ENCODE measurements at regions of chr11 and their contacts with region 1.

Region 1: GRCh38 chr11:10455637-10456487 is 798 bp downstream of the AMPD3 start:
- DNase-seq: peak; percentile 70 to 91 (median 75)
- H3K4me3 ChIP-seq: peak overlapping the region; percentile 53 to 85
- H3K4me3 Mint-ChIP-seq: peak overlapping the region; percentile 90 to 96 (median 93)
- H3K27ac ChIP-seq: peak overlapping the region; percentile 75
- H3K27ac Mint-ChIP-seq: peak overlapping the region; percentile 94 to 97 (median 95)
- H3K4me1 ChIP-seq: peaks cover 84% of the 10 kb centered on the region
- H3K4me1 Mint-ChIP-seq: peaks cover 59 to 97% (median 79%) of the 10 kb centered on the region in 4 donors
- H3K27me3 ChIP-seq: no peaks in the 10 kb centered on the region
- H3K27me3 Mint-ChIP-seq: no peaks in the 10 kb centered on the region

Region 2: DNA sequence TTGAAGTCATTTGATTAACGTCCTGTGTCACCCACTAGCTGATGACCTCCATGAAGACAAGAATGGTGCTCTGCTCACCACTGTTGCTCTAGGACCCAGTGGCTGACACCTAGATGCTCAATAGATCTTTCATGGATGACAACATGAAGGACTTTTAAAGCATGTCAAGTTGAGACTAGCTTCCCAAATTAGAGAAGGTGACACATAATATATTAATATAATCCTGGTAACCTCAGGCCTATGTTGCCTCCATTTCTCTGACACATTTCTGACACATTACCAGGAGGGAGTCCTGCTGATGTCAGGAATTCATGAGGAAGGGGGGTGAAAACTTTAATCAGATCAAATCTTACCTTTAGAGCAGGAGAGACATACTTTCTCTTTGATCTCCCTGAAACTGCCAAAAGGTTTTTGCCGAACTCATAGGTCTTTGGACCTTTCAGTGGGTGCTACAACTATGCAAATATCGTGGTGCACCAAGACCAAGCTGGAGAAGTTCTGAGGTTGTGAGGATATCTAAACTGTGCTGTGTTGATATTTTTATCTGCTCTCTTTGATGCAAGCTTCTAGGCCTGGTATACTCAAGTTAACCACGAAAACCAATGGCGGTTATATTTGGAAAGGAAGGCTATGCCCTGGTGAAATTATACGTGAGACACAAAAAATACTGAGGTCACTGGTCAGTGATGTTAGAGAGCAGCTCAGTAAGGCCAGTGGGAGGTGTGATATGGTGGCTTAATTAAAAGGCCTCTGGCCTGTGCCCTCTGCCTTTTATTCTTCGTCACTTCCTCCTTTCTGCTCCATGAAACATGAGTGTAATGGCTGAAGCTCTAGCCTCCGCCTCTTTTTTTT is 14.0 kb before region 1 on chr11:
- CTCF ChIA-PET with region 1: interaction called, 16 read pairs
- POLR2A ChIA-PET with region 1: interaction called, 16 read pairs
- intact Hi-C with region 1: no loop called
- DNase-seq: peak in 3 of 5 donors; percentile 10 to 56 (median 28)
- H3K4me3 ChIP-seq: no peak overlapping the region
- H3K4me3 Mint-ChIP-seq: peak overlapping the region in 3 of 8 donors; percentile 25 to 57 (median 27)
- H3K27ac ChIP-seq: no peak overlapping the region
- H3K27ac Mint-ChIP-seq: peak overlapping the region; percentile 26 to 86 (median 73)
- H3K4me1 ChIP-seq: peaks cover 10% of the 10 kb centered on the region
- H3K4me1 Mint-ChIP-seq: peaks cover 13 to 40% (median 17%) of the 10 kb centered on the region in 4 donors
- H3K27me3 ChIP-seq: no peaks in the 10 kb centered on the region
- H3K27me3 Mint-ChIP-seq: no peaks in the 10 kb centered on the region

Region 3: GRCh38 chr11:10474551-10474950 is 18.7 kb after region 1 on chr11:
- CTCF ChIA-PET with region 1: interaction called, 4 read pairs
- POLR2A ChIA-PET with region 1: interaction called, 3 read pairs
- intact Hi-C with region 1: loop called (anchors 1 kb)
- DNase-seq: no peak
- H3K4me3 ChIP-seq: no peak overlapping the region
- H3K4me3 Mint-ChIP-seq: no peak overlapping the region
- H3K27ac ChIP-seq: no peak overlapping the region
- H3K27ac Mint-ChIP-seq: peak overlapping the region; percentile 5 to 75 (median 52)
- H3K4me1 ChIP-seq: no peaks in the 10 kb centered on the region
- H3K4me1 Mint-ChIP-seq: peaks cover 20 to 58% (median 35%) of the 10 kb centered on the region in 4 donors
- H3K27me3 ChIP-seq: no peaks in the 10 kb centered on the region
- H3K27me3 Mint-ChIP-seq: no peaks in the 10 kb centered on the region

Region 4: DNA sequence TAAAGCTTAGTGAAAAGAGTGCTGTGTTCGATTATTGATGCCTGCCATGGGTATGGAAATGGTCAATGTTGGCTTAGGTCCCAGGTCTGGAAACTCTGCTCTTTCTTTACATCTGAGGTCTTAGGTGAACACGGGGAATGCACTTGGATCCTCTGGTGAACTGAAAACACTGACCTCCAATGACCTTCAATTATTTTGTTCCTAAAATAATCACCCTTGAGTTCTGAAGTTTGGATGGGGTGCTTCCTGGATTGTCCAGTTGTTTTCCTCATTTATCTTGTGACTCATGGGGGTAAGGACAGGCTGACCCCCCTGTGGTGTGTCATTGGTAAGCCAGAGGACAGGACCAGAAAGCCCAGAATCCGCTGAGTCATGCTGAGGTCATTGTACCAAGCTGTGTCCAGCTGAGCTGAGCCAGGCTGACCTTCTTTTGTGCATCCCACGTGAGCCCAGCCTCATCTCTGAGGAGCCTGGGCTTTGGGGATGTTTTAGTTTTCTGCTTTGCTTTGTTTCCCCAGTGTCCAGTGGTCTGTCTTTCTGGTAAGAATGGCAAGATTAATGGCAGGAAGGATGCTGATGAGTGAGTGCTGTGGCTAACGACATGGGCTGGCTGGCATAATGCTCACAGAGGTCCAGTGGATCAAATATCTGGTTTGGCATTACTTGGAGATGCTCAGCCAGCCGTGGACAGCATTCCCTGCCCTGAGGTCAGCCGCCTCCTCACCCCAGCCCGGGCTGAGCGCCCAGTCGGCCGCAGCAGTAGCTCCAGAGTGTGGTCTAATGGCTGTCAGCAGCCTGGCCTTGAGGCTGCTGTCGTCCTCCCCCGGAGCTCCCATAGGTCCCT is 34.8 kb after region 1 on chr11:
- CTCF ChIA-PET with region 1: interaction called, 3 read pairs
- POLR2A ChIA-PET with region 1: interaction called, 5 read pairs
- intact Hi-C with region 1: loop called (anchors 5 kb)
- DNase-seq: no peak
- H3K4me3 ChIP-seq: no peak overlapping the region
- H3K4me3 Mint-ChIP-seq: no peak overlapping the region
- H3K27ac ChIP-seq: no peak overlapping the region
- H3K27ac Mint-ChIP-seq: peak overlapping the region in 5 of 7 donors; percentile 11 to 90 (median 53)
- H3K4me1 ChIP-seq: peaks cover 5% of the 10 kb centered on the region
- H3K4me1 Mint-ChIP-seq: peaks cover 0 to 16% (median 7%) of the 10 kb centered on the region in 4 donors
- H3K27me3 ChIP-seq: no peaks in the 10 kb centered on the region
- H3K27me3 Mint-ChIP-seq: no peaks in the 10 kb centered on the region

Region 5: GRCh38 chr11:10561043-10561818 is 105.4 kb after region 1 on chr11:
- CTCF ChIA-PET with region 1: no interaction called
- POLR2A ChIA-PET with region 1: no interaction called
- intact Hi-C with region 1: no loop called
- DNase-seq: no peak
- H3K4me3 ChIP-seq: no peak overlapping the region
- H3K4me3 Mint-ChIP-seq: no peak overlapping the region
- H3K27ac ChIP-seq: no peak overlapping the region
- H3K27ac Mint-ChIP-seq: no peak overlapping the region
- H3K4me1 ChIP-seq: no peaks in the 10 kb centered on the region
- H3K4me1 Mint-ChIP-seq: peaks cover 0 to 2% (median 0%) of the 10 kb centered on the region in 4 donors
- H3K27me3 ChIP-seq: no peaks in the 10 kb centered on the region
- H3K27me3 Mint-ChIP-seq: peaks cover 4 to 10% of the 10 kb centered on the region in 2 donors

Region 6: GRCh38 chr11:10735481-10736475 is 279.9 kb after region 1 on chr11:
- CTCF ChIA-PET with region 1: interaction called, 7 read pairs
- POLR2A ChIA-PET with region 1: interaction called, 13 read pairs
- intact Hi-C with region 1: loop called (anchors 5 kb)
- DNase-seq: peak; percentile 77 to 83 (median 80)
- H3K4me3 ChIP-seq: no peak overlapping the region
- H3K4me3 Mint-ChIP-seq: peak overlapping the region; percentile 36 to 81 (median 64)
- H3K27ac ChIP-seq: no peak overlapping the region
- H3K27ac Mint-ChIP-seq: peak overlapping the region in 5 of 7 donors; percentile 28 to 70 (median 45)
- H3K4me1 ChIP-seq: peaks cover 10% of the 10 kb centered on the region
- H3K4me1 Mint-ChIP-seq: peaks cover 9 to 26% (median 17%) of the 10 kb centered on the region in 4 donors
- H3K27me3 ChIP-seq: no peaks in the 10 kb centered on the region
- H3K27me3 Mint-ChIP-seq: peaks cover 4 to 9% of the 10 kb centered on the region in 2 donors

Region 7: GRCh38 chr11:10742471-10743208 is 286.8 kb after region 1 on chr11:
- CTCF ChIA-PET with region 1: no interaction called
- POLR2A ChIA-PET with region 1: interaction called, 13 read pairs
- intact Hi-C with region 1: loop called (anchors 5 kb)
- DNase-seq: peak; percentile 44 to 81 (median 54)
- H3K4me3 ChIP-seq: no peak overlapping the region
- H3K4me3 Mint-ChIP-seq: peak overlapping the region; percentile 16 to 86 (median 72)
- H3K27ac ChIP-seq: peak overlapping the region; percentile 40
- H3K27ac Mint-ChIP-seq: peak overlapping the region; percentile 80 to 93 (median 84)
- H3K4me1 ChIP-seq: peaks cover 41% of the 10 kb centered on the region
- H3K4me1 Mint-ChIP-seq: peaks cover 27 to 58% (median 36%) of the 10 kb centered on the region in 4 donors
- H3K27me3 ChIP-seq: no peaks in the 10 kb centered on the region
- H3K27me3 Mint-ChIP-seq: no peaks in the 10 kb centered on the region

Region 8: DNA sequence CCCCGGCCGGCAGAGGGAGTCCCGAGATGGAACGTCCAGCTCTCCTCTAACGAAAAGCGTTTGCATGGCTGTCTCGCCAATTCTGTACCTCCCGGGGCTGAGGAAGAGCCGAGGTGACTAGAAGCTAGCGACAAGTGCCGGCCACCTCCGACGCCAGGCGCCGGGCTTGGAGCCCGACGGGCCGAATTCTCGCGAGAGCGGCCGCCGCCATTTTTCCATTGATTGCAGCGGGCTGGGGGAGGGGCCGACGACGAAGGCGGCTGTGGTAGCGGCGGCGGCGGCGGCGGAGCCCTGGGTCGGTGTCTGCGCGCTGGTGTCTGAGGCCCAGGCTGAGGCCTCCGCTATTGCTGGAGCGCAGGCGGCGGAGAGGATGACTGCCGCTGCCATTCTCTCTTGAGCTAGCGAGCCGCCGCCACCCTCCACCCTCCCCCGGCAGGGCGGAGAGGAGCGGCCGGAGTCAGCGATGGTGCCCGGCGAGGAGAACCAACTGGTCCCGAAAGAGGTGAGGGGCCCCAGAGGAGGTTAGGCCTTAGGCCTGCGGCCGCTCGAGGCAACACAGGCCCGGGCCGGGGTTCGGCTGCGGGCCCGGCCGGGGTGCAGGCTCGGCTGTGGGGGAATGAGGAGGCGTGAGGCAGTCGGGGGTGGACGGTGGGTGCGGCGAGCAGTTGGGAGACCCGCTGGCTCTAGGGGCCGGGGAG is 1386.0 kb after region 1 on chr11 and contains the start of gene USP47:
- CTCF ChIA-PET with region 1: no interaction called
- POLR2A ChIA-PET with region 1: interaction called, 6 read pairs
- intact Hi-C with region 1: loop called (anchors 5 kb)
- DNase-seq: peak; percentile 91 to 96 (median 95)
- H3K4me3 ChIP-seq: peak within 1 kb of the TSS; percentile 27 to 85
- H3K4me3 Mint-ChIP-seq: peak within 1 kb of the TSS in 1 of 8 donors; percentile 86
- H3K27ac ChIP-seq: peak within 1 kb of the TSS; percentile 98
- H3K27ac Mint-ChIP-seq: peak within 1 kb of the TSS in 4 of 7 donors; percentile 88 to 90 (median 90)
- H3K4me1 ChIP-seq: peaks cover 39% of the 10 kb centered on the region
- H3K4me1 Mint-ChIP-seq: peaks cover 0 to 24% (median 2%) of the 10 kb centered on the region in 4 donors
- H3K27me3 ChIP-seq: no peaks in the 10 kb centered on the region
- H3K27me3 Mint-ChIP-seq: peaks cover 8 to 11% of the 10 kb centered on the region in 2 donors
- total RNA-seq, gene USP47: 62.2 to 65.9 TPM